ENCODE measurements at regions of chr5 and their contacts with region 1.

Region 1: DNA sequence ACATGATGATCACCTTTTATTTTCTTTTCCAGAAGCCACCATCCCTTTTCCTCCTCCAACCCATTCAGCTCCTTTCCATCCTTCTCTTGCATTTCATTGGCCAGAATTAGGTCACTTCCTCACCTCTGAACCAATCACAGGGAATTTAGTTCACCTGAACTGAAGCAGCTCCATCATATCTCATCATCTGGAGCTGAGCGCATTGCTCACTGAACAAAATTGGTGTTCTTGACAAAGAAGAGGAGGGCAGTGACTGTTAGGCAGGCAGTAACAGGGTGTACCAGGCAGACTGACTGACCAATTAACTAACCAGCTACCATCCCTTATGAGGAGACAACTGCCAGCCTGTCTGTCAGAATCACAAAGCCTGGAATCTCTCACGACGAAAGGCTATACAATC is 1.8 kb upstream of the ZNF354A start:
- DNase-seq: no peak
- ATAC-seq: no peak
- H3K4me3 ChIP-seq: no peak overlapping the region
- H3K4me3 Mint-ChIP-seq: peak overlapping the region in 1 of 10 donors; percentile 42
- H3K27ac ChIP-seq: no peak overlapping the region
- H3K27ac Mint-ChIP-seq: peak overlapping the region in 1 of 9 donors; percentile 45
- H3K4me1 ChIP-seq: no peaks in the 10 kb centered on the region
- H3K4me1 Mint-ChIP-seq: peaks cover 0 to 13% (median 11%) of the 10 kb centered on the region in 7 donors
- H3K27me3 ChIP-seq: no peaks in the 10 kb centered on the region
- H3K27me3 Mint-ChIP-seq: peaks cover 0 to 3% (median 0%) of the 10 kb centered on the region in 5 donors

Region 2: GRCh38 chr5:178461004-178461730 is 271.1 kb before region 1 on chr5:
- CTCF ChIA-PET with region 1: no interaction called
- POLR2A ChIA-PET with region 1: no interaction called
- intact Hi-C with region 1: loop called in 1 of 2 experiments (anchors 1 kb)
- DNase-seq: peak in 6 of 9 donors; percentile 17 to 44 (median 30)
- ATAC-seq: peak; percentile 82
- H3K4me3 ChIP-seq: no peak overlapping the region
- H3K4me3 Mint-ChIP-seq: no peak overlapping the region
- H3K27ac ChIP-seq: no peak overlapping the region
- H3K27ac Mint-ChIP-seq: no peak overlapping the region
- H3K4me1 ChIP-seq: no peaks in the 10 kb centered on the region
- H3K4me1 Mint-ChIP-seq: peaks cover 0 to 2% (median 0%) of the 10 kb centered on the region in 7 donors
- H3K27me3 ChIP-seq: no peaks in the 10 kb centered on the region
- H3K27me3 Mint-ChIP-seq: no peaks in the 10 kb centered on the region

Region 3: GRCh38 chr5:178780581-178781535 is 48.6 kb after region 1 on chr5:
- CTCF ChIA-PET with region 1: no interaction called
- POLR2A ChIA-PET with region 1: no interaction called
- intact Hi-C with region 1: no loop called
- DNase-seq: no peak
- ATAC-seq: no peak
- H3K4me3 ChIP-seq: no peak overlapping the region
- H3K4me3 Mint-ChIP-seq: no peak overlapping the region
- H3K27ac ChIP-seq: no peak overlapping the region
- H3K27ac Mint-ChIP-seq: no peak overlapping the region
- H3K4me1 ChIP-seq: no peaks in the 10 kb centered on the region
- H3K4me1 Mint-ChIP-seq: peaks cover 0 to 4% (median 2%) of the 10 kb centered on the region in 7 donors
- H3K27me3 ChIP-seq: no peaks in the 10 kb centered on the region
- H3K27me3 Mint-ChIP-seq: peaks cover 0 to 12% (median 5%) of the 10 kb centered on the region in 5 donors

Region 4: DNA sequence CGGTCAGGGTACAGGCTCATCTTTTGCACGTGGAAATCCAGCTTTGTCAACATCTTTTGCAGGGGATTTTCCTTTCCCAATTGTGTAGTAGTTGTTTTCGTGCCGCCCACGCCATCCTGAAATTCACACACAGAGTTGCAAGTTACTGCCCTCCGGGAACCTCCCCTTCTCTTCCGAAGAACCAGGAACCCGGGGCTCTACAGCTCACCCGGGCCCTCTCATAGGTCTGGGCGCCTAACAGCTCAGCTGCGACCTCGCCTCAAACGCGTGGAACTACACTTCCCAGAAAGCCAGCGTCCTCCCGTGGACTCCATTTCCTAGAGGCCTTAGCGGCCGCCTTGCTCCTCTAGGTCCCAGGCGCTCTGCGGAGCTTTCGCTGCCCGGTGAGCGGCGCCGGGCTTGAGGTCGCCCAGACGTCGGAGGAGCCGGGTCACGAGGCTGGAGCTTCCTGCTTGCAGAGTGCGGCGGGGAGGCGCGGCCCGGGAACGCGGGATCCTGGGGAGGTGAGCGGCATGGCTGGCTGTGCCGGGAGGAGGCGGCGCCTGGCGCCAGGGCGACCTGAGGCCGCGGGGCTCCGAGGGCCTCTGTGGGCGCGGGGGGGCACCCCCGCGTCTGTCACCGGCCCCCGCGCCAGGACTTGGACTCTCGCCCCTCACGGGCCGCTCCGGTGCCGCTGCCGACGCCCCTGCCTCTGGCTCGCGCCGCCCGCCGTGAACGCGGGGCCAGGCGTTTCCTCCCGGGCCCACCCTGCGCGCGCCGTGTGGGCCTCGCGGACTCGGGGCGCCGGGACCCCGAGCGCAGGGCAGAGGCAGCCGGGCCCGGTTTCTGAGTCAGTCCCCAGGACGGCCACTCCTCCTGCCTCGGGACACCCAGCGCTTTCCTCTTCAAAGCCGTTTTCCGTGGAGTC is 127.6 kb after region 1 on chr5 and contains the start of gene ZNF354B:
- CTCF ChIA-PET with region 1: interaction called, 19 read pairs
- POLR2A ChIA-PET with region 1: interaction called, 21 read pairs
- intact Hi-C with region 1: loop called (anchors 1 kb)
- DNase-seq: peak; percentile 64 to 87 (median 81)
- ATAC-seq: peak; percentile 98
- H3K4me3 ChIP-seq: peak within 1 kb of the TSS; percentile 77
- H3K4me3 Mint-ChIP-seq: peak within 1 kb of the TSS; percentile 85 to 95 (median 93)
- H3K27ac ChIP-seq: peak within 1 kb of the TSS; percentile 75
- H3K27ac Mint-ChIP-seq: peak within 1 kb of the TSS; percentile 71 to 95 (median 90)
- H3K4me1 ChIP-seq: peaks cover 5 to 6% of the 10 kb centered on the region in 2 donors
- H3K4me1 Mint-ChIP-seq: peaks cover 22 to 34% (median 30%) of the 10 kb centered on the region in 7 donors
- H3K27me3 ChIP-seq: no peaks in the 10 kb centered on the region
- H3K27me3 Mint-ChIP-seq: peaks cover 0 to 4% (median 2%) of the 10 kb centered on the region in 5 donors
- total RNA-seq, gene ZNF354B: 12.3 to 36.7 (median 14.4) TPM

Region 5: GRCh38 chr5:179060116-179061008 is 328.1 kb after region 1 on chr5 and contains the start of gene ZNF354C:
- CTCF ChIA-PET with region 1: interaction called, 5 read pairs
- POLR2A ChIA-PET with region 1: interaction called, 16 read pairs
- intact Hi-C with region 1: loop called in 1 of 2 experiments (anchors 1 kb)
- DNase-seq: peak; percentile 77 to 87 (median 82)
- ATAC-seq: peak; percentile 98
- H3K4me3 ChIP-seq: peak within 1 kb of the TSS; percentile 73
- H3K4me3 Mint-ChIP-seq: peak within 1 kb of the TSS; percentile 89 to 99 (median 94)
- H3K27ac ChIP-seq: peak within 1 kb of the TSS; percentile 79
- H3K27ac Mint-ChIP-seq: peak within 1 kb of the TSS; percentile 82 to 96 (median 92)
- H3K4me1 ChIP-seq: peaks cover 0 to 9% of the 10 kb centered on the region in 2 donors
- H3K4me1 Mint-ChIP-seq: peaks cover 16 to 43% (median 32%) of the 10 kb centered on the region in 7 donors
- H3K27me3 ChIP-seq: no peaks in the 10 kb centered on the region
- H3K27me3 Mint-ChIP-seq: peaks cover 0 to 9% (median 5%) of the 10 kb centered on the region in 5 donors
- total RNA-seq, gene ZNF354C: 3.8 to 12.3 (median 5.2) TPM

Region 6: GRCh38 chr5:179678223-179679013 is 946.1 kb after region 1 on chr5:
- CTCF ChIA-PET with region 1: no interaction called
- POLR2A ChIA-PET with region 1: no interaction called
- intact Hi-C with region 1: loop called in 1 of 2 experiments (anchors 1 kb)
- DNase-seq: peak; percentile 88 to 95 (median 92)
- ATAC-seq: peak; percentile 91
- H3K4me3 ChIP-seq: peak overlapping the region; percentile 99
- H3K4me3 Mint-ChIP-seq: peak overlapping the region; percentile 95 to 99 (median 98)
- H3K27ac ChIP-seq: peak overlapping the region; percentile 87
- H3K27ac Mint-ChIP-seq: peak overlapping the region; percentile 89 to 99 (median 97)
- H3K4me1 ChIP-seq: peaks cover 4 to 5% of the 10 kb centered on the region in 2 donors
- H3K4me1 Mint-ChIP-seq: peaks cover 15 to 39% (median 30%) of the 10 kb centered on the region in 7 donors
- H3K27me3 ChIP-seq: no peaks in the 10 kb centered on the region
- H3K27me3 Mint-ChIP-seq: peaks cover 0 to 5% (median 0%) of the 10 kb centered on the region in 5 donors

Measured in naive thymus-derived CD4-positive, alpha-beta T cell (primary cell).